Activated CD4-positive, alpha-beta memory T cell treated with anti-CD3 and anti-CD28 coated beads, Interleukin-2, amount 10 ng/mL, durations not matched to agents 7 days and 5 days (primary cell): ENCODE measurements at regions of chr15 and their contacts with region 1.

Region 1: GRCh38 chr15:67101911-67102598 is 36.7 kb downstream of the SMAD3 start:
- DNase-seq: peak; percentile 74
- H3K4me3 Mint-ChIP-seq: no peak overlapping the region
- H3K27ac Mint-ChIP-seq: no peak overlapping the region
- H3K4me1 Mint-ChIP-seq: peaks cover 30% of the 10 kb centered on the region
- H3K27me3 Mint-ChIP-seq: no peaks in the 10 kb centered on the region

Region 2: GRCh38 chr15:67091071-67091979 is 10.7 kb before region 1 on chr15:
- CTCF ChIA-PET with region 1: interaction called, 15 read pairs
- POLR2A ChIA-PET with region 1: interaction called, 271 read pairs
- DNase-seq: peak; percentile 91
- H3K4me3 Mint-ChIP-seq: peak overlapping the region; percentile 73
- H3K27ac Mint-ChIP-seq: peak overlapping the region; percentile 83
- H3K4me1 Mint-ChIP-seq: peaks cover 100% of the 10 kb centered on the region
- H3K27me3 Mint-ChIP-seq: no peaks in the 10 kb centered on the region

Region 3: DNA sequence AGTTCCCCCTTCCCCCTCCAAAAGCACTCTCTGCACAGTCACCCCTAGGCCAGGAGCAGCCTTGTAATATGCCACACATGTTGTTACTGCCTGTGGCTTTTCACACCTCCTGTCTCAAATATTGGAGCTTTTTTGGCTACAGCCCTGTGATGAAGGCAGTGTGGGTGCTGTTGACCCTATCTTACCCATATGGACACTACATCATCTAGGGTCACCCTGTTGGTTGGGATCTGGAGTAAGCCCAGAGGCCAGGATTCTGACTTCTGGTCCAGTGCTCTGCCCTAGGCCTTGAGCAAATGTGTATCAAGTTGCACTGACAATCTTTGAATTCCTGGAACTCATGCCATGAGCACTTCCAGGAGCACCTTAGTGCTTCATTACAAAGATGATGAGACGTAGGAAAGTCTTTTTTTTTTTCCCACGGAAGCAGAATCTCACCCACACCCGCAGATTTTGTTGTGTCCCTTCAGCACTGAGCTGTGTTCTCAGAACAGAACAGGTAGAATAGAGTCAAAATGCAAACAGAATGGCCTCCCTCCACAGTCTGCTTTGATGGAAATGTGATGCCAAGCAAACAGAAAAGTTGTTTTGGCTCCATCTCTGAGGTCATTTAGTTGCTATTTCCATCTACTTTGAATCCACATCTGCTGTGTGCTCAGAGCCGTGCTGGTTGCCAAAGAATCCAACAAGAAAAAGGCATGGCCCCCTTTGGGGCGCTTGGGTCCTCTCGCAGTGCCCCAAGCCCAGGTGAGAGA is 13.0 kb after region 1 on chr15:
- CTCF ChIA-PET with region 1: interaction called, 6 read pairs
- POLR2A ChIA-PET with region 1: interaction called, 117 read pairs
- DNase-seq: peak; percentile 41
- H3K4me3 Mint-ChIP-seq: peak overlapping the region; percentile 3
- H3K27ac Mint-ChIP-seq: peak overlapping the region; percentile 80
- H3K4me1 Mint-ChIP-seq: peaks cover 93% of the 10 kb centered on the region
- H3K27me3 Mint-ChIP-seq: no peaks in the 10 kb centered on the region

Region 4: DNA sequence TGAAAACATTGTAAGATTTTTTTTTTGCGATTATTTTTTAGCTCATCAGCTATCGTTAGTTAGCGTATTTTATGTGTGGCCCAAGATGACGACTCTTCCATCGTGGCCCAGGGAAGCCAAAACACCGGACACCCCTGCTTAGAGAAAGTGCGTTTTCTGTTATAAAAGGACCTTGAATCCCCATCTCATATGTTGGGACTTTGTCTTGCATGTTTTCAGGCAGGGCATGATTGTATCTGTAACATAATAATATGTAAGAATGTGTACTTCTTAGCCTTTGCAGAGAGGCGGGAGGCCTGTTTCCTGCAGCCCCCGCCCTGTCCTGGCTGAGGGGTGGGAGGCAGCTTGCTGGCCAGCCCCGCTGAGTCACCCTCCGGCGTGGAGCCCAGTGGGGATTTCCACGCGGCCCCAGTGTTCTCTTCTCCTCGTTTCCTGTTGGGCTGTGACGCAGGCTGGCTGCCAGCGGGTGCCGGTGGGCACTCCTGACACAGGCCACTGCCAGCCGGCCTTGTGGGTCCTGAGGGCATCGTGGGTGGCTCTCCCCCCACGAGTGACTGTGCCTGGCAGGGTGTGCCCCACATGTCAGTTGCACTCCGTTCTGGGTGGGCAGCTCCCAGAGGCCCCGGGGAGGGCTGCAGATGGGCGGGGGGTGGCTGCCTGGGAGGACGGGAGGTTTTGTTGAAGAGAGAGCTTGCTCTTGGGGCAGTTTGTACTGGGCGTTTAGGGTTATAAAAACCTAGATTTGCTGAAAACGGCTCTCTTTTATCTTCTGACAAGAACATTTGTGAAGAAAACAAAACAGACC is 19.0 kb after region 1 on chr15:
- CTCF ChIA-PET with region 1: interaction called, 6 read pairs
- POLR2A ChIA-PET with region 1: interaction called, 117 read pairs
- DNase-seq: peak; percentile 86
- H3K4me3 Mint-ChIP-seq: peak overlapping the region; percentile 23
- H3K27ac Mint-ChIP-seq: peak overlapping the region; percentile 77
- H3K4me1 Mint-ChIP-seq: peaks cover 95% of the 10 kb centered on the region
- H3K27me3 Mint-ChIP-seq: no peaks in the 10 kb centered on the region

Region 5: DNA sequence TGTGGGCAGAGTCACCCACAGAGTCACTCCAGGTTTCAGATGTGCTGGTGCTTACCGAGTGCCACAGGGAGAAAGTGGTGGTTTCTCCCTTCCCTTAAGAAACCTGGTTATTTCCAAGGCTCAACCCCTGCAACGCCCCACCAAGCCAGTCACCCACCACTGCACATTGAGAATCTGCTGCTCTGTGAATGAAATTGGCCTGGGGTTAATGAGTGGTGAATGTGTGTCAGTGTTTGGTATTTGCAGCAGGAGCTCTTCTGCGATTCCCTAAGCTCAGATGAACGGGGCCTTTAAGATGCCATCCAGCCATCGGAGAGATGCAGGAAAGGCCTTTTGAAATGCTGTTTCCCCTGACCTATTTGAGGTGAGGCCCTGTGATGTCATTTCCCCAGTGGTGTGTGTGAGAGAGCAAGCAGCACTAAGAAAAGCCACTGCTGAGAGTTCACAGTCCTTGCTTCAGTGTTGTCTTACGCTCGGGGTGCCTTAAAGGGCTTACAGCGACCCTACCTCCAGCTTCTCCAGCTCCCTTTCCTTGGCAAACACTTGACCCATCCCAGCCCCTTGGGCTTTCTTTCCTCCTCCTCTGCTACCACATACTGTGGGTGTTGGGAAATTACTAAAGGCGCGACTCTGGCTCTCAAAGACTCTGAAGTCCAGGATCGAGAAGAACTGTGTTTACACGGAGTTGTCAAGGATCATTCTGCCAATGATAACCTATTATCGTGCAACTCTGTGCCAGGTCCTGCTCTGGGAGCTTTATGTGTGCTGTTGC is 32.2 kb after region 1 on chr15:
- CTCF ChIA-PET with region 1: interaction called, 8 read pairs
- POLR2A ChIA-PET with region 1: interaction called, 83 read pairs
- DNase-seq: peak; percentile 80
- H3K4me3 Mint-ChIP-seq: peak overlapping the region; percentile 73
- H3K27ac Mint-ChIP-seq: peak overlapping the region; percentile 89
- H3K4me1 Mint-ChIP-seq: peaks cover 93% of the 10 kb centered on the region
- H3K27me3 Mint-ChIP-seq: no peaks in the 10 kb centered on the region

Region 6: DNA sequence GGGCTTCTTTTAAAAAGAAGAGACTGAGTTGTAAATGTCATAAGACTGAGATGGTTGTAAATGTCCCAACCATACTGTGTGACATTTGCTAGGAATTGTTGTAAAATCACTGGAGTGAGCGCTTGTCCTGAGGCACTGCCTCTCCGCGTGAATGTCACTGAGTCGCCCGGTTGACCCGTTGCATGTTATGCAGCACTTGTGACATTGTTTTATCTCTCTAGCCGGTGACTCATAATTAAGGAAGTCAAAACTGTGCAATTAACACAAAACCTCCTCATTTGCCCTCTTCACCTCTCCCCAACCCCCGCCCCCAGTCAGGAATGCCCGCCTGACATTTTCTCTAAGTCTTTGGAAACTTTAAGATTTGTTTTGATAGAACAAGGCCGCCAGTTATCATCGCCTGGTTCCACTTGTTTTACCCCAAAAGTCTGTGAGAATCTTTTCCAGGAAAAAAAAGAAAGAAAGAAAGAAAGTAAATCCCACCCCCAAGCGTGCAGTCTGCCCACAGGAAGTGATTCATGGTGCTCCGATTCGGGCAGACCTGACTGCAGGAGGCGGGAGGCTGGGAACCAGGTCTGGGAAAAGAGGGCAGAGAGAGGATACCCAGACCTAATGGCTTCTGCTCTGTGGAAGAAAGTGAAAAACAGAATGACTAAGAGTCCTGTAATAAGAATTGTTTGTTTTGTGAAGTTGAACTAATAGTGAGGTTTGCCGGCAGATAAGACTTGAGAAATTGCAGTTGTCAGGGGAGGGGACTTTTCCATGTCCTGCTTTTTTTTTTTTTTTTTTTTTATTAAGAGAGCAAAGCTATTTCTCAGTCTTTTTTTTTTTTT is 48.2 kb after region 1 on chr15:
- CTCF ChIA-PET with region 1: no interaction called
- POLR2A ChIA-PET with region 1: interaction called, 17 read pairs
- DNase-seq: peak; percentile 48
- H3K4me3 Mint-ChIP-seq: peak overlapping the region; percentile 33
- H3K27ac Mint-ChIP-seq: peak overlapping the region; percentile 53
- H3K4me1 Mint-ChIP-seq: peaks cover 75% of the 10 kb centered on the region
- H3K27me3 Mint-ChIP-seq: no peaks in the 10 kb centered on the region

Region 7: GRCh38 chr15:67240235-67241131 is 138.4 kb after region 1 on chr15:
- CTCF ChIA-PET with region 1: interaction called, 8 read pairs
- POLR2A ChIA-PET with region 1: interaction called, 21 read pairs
- DNase-seq: peak; percentile 45
- H3K4me3 Mint-ChIP-seq: peak overlapping the region; percentile 68
- H3K27ac Mint-ChIP-seq: peak overlapping the region; percentile 92
- H3K4me1 Mint-ChIP-seq: peaks cover 46% of the 10 kb centered on the region
- H3K27me3 Mint-ChIP-seq: no peaks in the 10 kb centered on the region